Mammary epithelial cell (primary cell): ENCODE measurements at regions of chr9 and their contacts with region 1.

Region 1: DNA sequence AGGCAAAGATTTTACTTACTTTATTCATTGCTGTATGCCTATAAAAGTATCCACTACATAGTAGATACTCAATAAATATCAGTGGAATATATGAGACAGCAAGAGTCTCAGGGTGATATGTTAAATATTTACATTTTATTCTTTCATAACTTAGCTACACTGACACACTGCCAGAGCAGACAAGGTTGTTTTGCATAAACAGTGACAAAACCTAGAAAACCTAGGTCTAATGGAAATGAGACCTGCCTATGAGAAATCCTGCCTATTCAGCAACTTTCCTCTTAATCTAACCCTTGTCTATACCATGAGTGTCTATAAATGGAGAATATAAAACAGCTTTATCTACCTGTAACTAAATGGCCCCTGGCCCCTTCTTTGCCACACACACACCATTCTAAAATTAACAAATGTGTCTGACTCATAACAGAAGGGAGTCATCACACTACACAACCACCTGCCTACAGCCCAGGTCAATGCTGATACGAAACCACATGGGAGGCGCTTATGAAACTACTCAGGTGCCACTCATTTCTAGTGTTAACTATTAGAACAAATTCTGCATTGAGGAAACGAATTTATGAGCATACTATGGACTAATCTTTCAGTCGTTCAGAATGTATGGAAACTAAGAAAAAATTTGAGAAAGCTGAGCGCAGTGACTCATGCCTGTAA is 60.3 kb downstream of the UBAP2 start:
- DNase-seq: peak; percentile 64
- H3K4me3 ChIP-seq: no peak overlapping the region
- H3K27ac ChIP-seq: no peak overlapping the region
- H3K4me1 ChIP-seq: no peaks in the 10 kb centered on the region
- H3K27me3 ChIP-seq: no peaks in the 10 kb centered on the region
- CTCF ChIP-seq: no peak

Region 2: GRCh38 chr9:33903157-33903780 is 85.1 kb before region 1 on chr9:
- CTCF ChIA-PET with region 1: no interaction called
- dilution Hi-C with region 1: loop called (anchors 5 kb)
- in situ Hi-C with region 1: no loop called
- intact Hi-C with region 1: no loop called
- DNase-seq: no peak
- H3K4me3 ChIP-seq: no peak overlapping the region
- H3K27ac ChIP-seq: no peak overlapping the region
- H3K4me1 ChIP-seq: no peaks in the 10 kb centered on the region
- H3K27me3 ChIP-seq: no peaks in the 10 kb centered on the region
- CTCF ChIP-seq: no peak

Region 3: DNA sequence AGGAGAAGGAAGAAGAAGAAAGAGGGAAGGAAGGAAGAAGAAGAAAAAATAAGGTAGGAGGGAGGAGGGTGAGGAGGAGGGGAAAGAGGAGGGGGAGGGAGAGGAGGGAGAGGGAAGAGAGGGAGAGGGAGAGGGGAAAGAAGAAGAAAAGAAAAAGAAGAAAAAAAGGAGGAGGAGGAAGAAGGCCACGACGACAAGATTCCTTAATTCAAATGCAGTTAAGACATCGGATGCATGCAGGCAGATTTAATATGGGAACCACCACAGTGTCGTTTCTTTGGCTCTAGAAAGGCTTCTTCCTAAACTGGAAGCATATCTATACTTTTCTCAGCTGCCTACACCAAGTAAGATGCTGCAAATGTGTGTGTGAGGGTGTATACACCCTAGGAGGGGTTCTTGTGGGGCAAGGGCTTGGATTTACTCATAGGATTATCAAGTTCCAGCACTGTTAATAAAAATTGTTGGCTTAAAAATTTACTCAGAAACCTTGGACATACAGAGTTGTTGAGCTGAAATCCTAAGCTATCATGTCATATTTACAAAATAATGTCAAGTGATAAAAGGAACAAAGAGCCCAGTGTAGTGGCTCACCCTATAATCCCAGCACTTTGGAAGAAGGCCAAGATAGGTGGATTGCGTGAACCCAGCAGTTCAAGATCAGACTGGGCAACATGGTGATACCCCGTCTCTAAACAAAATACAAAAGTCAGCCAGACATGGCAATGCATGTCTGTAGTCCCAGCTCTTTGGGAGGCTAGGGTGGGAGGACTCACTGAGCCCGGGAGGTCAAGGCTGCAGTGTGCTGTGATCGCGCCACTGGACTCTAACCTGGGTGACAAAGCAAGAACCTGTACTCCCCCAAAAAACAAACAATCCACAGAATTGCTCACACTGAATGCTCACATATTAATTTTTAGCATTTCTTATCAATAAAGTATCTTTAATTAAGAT is 48.2 kb before region 1 on chr9:
- CTCF ChIA-PET with region 1: no interaction called
- dilution Hi-C with region 1: loop called (anchors 5 kb)
- in situ Hi-C with region 1: no loop called
- intact Hi-C with region 1: no loop called
- DNase-seq: peak; percentile 69
- H3K4me3 ChIP-seq: no peak overlapping the region
- H3K27ac ChIP-seq: no peak overlapping the region
- H3K4me1 ChIP-seq: peaks cover 17% of the 10 kb centered on the region
- H3K27me3 ChIP-seq: no peaks in the 10 kb centered on the region
- CTCF ChIP-seq: no peak

Region 4: DNA sequence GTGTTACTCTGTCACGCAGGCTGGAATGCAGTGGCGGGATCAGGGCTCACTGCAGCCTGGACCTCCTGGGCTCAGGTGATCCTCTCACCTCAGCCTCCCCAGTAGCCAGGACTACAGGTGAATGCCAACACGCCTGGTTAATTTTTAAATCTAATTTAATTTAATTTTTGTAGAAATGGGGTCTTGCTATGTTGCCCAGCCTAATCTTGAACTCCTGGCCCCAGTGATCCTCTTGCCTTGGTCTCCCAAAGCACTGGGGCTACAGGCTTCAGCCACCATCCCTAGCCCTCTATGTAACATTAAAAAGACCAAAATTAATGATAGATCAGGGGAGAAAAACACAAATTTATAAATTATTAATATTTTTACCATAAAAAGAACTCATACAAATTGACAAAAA is 71.6 kb after region 1 on chr9:
- CTCF ChIA-PET with region 1: no interaction called
- dilution Hi-C with region 1: loop called (anchors 5 kb)
- in situ Hi-C with region 1: no loop called
- intact Hi-C with region 1: no loop called
- DNase-seq: no peak
- H3K4me3 ChIP-seq: no peak overlapping the region
- H3K27ac ChIP-seq: no peak overlapping the region
- H3K4me1 ChIP-seq: no peaks in the 10 kb centered on the region
- H3K27me3 ChIP-seq: no peaks in the 10 kb centered on the region
- CTCF ChIP-seq: no peak